Esophagus squamous epithelium (tissue), 5 donors: ENCODE measurements at regions of chr9 and their contacts with region 1.

Region 1: DNA sequence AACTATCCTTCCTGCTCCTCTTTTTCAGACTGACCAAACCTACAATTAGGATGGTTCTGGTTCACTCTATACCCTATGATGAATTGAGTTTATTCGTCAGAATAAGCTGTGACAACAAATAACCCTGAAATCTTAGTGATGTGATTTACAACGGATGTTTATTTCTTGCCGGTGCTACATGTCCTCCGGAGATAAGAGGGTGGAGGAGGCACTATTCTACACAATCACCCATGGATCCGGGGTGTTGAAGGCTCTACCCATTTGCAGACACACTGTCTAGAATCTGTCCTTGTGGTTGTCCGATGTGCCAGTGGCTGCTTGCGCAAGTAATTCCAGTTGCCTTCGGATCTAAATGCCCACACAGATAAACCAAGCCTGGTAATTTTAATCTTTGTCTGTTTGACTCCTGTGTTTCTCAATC is 44.7 kb downstream of the CDC14B start:
- DNase-seq: no peak
- H3K4me3 ChIP-seq: no peak overlapping the region
- H3K27ac ChIP-seq: no peak overlapping the region
- H3K4me1 ChIP-seq: no peaks in the 10 kb centered on the region
- H3K27me3 ChIP-seq: no peaks in the 10 kb centered on the region
- CTCF ChIP-seq: no peak
- POLR2A ChIP-seq: no peak

Region 2: DNA sequence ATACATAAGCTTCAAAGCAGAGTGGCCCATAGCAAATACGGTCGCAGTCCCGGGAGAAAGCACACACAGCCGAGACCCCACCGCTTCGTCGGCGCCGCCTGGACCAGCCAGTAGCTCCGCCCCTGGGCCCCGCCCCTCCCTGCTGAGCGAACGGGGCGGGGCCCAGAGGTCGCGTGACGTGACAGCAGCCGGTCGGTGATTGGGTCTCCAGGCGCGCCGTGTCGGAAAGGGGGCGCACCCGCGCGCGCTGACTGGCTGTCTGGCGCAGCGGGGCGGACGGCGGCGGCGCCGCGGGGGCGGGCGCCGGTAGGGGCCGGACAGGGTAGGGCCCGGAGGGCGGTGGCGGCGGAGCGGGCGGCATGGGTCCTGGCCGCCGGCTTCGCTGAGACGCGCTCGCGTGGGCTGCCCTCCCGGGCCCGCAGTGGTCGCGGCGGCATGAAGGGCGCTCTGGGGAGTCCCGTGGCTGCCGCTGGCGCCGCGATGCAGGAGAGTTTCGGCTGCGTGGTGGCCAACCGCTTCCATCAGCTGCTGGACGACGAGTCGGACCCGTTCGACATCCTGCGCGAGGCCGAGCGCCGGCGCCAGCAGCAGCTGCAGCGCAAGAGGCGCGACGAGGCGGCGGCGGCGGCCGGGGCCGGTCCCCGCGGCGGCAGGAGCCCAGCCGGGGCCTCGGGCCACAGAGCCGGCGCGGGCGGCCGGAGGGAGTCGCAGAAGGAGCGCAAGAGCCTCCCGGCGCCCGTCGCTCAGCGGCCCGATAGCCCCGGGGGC is 124.9 kb before region 1 on chr9 and contains the start of gene HABP4:
- intact Hi-C with region 1: loop called (anchors 10 kb)
- DNase-seq: peak; percentile 64
- H3K4me3 ChIP-seq: peak within 1 kb of the TSS; percentile 68 to 94 (median 72)
- H3K27ac ChIP-seq: peak within 1 kb of the TSS; percentile 84 to 95 (median 90)
- H3K4me1 ChIP-seq: peaks cover 4 to 30% (median 14%) of the 10 kb centered on the region in 3 donors
- H3K27me3 ChIP-seq: peaks cover 0 to 7% (median 0%) of the 10 kb centered on the region in 4 donors
- CTCF ChIP-seq: peak in 4 of 6 experiments; percentile 18 to 25 (median 20)
- POLR2A ChIP-seq: peak in 3 of 4 donors; percentile 86 to 95 (median 91)
- total RNA-seq, gene HABP4: 0.80 to 12.4 (median 2.7) TPM

Region 3: GRCh38 chr9:96725576-96725975 is 150.6 kb after region 1 on chr9:
- intact Hi-C with region 1: no loop called
- DNase-seq: no peak
- H3K4me3 ChIP-seq: no peak overlapping the region
- H3K27ac ChIP-seq: no peak overlapping the region
- H3K4me1 ChIP-seq: peaks cover 0 to 6% (median 2%) of the 10 kb centered on the region in 3 donors
- H3K27me3 ChIP-seq: no peaks in the 10 kb centered on the region
- CTCF ChIP-seq: no peak
- POLR2A ChIP-seq: no peak